WTC11 (cell line): ENCODE measurements at regions of chr17 and their contacts with region 1.

Region 1: DNA sequence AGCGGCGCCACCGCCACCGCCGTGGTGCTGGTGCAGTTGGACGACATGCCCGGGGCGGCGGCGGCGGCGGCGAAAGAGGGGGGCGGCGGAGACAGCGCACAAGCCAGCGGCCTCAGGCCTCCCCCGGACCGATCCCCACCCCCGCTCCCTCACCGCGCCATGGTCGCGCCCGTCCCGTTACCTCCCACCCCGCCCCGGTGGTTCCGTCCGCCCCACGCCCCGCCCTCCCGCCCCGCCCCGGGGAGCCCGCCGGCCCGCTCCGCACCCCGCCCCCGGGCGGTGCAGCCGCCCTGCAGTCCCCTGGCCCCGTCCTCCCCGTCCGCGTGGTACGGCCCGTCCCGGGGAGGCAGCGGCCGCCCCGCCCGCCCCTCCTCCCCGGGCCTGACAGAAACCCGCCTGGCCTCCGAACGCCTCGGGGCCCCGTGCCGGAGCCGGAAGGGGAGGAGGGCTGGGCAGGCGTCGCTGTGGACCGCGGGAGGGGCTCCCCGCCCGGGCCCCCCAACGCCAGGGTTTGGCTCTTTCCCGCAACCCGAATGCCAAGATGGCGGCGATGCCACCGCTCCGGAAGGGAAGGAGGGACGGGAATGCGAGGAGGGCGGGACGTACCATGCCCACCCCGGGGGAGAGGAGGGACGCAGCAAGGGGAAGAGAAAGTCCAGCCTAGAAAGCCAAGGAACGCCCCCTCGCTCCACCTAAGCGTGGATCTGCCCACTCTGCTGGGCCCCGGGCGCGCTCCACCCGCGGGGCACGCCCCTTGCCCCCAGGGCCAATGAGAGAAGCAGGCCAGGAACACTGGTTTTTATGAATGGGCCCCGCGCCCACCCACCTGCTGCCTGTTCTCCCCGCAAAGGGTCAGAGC is at the start of gene PIP4K2B:
- DNase-seq: peak; percentile 97
- ATAC-seq: peak; percentile 94
- H3K4me3 Mint-ChIP-seq: peak within 1 kb of the TSS; percentile 98
- H3K27ac Mint-ChIP-seq: peak within 1 kb of the TSS; percentile 97
- H3K4me1 Mint-ChIP-seq: peaks cover 21% of the 10 kb centered on the region
- H3K27me3 Mint-ChIP-seq: no peaks in the 10 kb centered on the region
- CTCF ChIP-seq: no peak
- total RNA-seq, gene PIP4K2B: 54.0 to 61.9 TPM (median 57.3 TPM) in 3 replicates

Region 2: DNA sequence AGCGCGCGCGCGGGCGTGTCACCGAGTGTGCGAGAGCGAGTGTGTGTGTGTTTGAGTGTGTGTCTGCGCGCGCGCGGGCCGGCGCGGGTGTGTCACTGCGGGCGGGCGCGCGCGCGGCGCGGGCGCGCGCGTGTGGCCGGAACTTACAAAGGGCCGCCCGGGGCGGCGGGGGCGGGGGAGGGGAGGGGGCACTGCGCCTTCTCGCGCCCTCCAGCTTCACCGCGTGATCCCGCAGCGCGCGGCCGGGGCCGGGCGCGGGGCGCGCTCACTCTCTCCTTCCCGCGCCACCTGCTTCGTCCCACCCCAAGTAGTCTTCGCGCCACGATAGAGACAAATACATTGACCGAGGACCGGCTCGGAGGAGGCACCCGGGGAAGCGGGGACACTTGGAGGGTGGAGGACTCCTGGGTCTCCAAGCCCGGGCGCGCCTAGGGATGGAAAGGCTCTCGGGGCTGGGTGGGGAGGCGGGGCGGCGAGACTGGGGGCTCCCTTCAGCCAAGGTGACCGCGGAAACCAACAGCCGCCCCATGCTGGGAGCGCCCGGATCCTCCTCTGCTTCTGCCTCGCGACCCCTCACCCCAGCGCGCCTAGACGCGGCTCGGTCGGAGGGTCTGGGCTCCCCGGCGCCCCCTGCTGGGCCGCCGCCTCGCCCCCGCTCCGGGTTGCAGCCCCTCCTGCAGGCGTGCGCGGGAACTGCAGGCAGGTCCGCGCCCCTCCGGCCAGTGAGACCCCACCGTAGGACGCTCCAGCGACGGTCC is 193.5 kb before region 1 on chr17 and contains the start of gene SRCIN1:
- CTCF ChIA-PET with region 1: no interaction called
- POLR2A ChIA-PET with region 1: no interaction called
- DNase-seq: peak; percentile 74
- ATAC-seq: peak; percentile 5
- H3K4me3 Mint-ChIP-seq: peak within 1 kb of the TSS; percentile 71
- H3K27ac Mint-ChIP-seq: no peak within 1 kb of the TSS
- H3K4me1 Mint-ChIP-seq: peaks cover 72% of the 10 kb centered on the region
- H3K27me3 Mint-ChIP-seq: peaks cover 44% of the 10 kb centered on the region
- CTCF ChIP-seq: peak; percentile 99
- total RNA-seq, gene SRCIN1: 10.7 to 17.3 TPM (median 11.1 TPM) in 3 replicates

Region 3: GRCh38 chr17:38702166-38702899 is 97.3 kb before region 1 on chr17:
- CTCF ChIA-PET with region 1: no interaction called
- POLR2A ChIA-PET with region 1: no interaction called
- DNase-seq: peak; percentile 81
- ATAC-seq: peak; percentile 31
- H3K4me3 Mint-ChIP-seq: peak overlapping the region; percentile 88
- H3K27ac Mint-ChIP-seq: no peak overlapping the region
- H3K4me1 Mint-ChIP-seq: peaks cover 48% of the 10 kb centered on the region
- H3K27me3 Mint-ChIP-seq: peaks cover 91% of the 10 kb centered on the region
- CTCF ChIP-seq: no peak

Region 4: DNA sequence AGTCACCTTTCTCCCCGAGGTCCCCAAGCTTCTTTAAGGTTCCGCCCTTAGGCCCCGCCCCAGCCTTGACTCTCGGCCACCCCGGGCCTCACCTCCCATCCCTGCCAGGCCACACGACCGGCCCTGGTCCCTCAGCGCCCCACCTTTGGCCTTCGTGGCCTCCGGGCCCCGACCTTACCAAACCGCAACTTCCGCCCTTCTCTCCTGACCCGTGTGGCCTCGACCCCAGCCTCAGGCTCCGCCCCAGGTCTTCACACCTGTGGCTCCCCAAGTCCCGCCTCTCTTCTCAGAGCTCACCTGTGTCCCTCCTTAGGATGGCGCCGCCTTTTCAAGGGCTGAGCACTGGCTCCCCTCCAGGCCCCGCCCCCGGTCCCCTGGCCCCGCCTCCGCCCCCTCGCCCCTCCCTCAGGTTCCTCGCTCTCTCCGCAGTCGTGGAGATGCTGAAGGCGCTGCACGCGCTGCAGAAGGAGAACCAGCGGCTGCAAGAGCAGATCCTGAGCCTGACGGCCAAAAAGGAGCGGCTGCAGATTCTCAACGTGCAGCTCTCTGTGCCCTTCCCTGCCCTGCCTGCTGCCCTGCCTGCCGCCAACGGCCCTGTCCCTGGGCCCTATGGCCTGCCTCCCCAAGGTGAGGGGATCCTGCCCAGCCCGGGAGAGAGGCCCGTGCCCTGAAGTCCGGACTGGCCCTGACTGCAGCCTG is 79.5 kb before region 1 on chr17:
- CTCF ChIA-PET with region 1: no interaction called
- POLR2A ChIA-PET with region 1: no interaction called
- DNase-seq: peak; percentile 85
- ATAC-seq: peak; percentile 69
- H3K4me3 Mint-ChIP-seq: peak overlapping the region; percentile 54
- H3K27ac Mint-ChIP-seq: no peak overlapping the region
- H3K4me1 Mint-ChIP-seq: peaks cover 39% of the 10 kb centered on the region
- H3K27me3 Mint-ChIP-seq: peaks cover 12% of the 10 kb centered on the region
- CTCF ChIP-seq: no peak

Region 5: DNA sequence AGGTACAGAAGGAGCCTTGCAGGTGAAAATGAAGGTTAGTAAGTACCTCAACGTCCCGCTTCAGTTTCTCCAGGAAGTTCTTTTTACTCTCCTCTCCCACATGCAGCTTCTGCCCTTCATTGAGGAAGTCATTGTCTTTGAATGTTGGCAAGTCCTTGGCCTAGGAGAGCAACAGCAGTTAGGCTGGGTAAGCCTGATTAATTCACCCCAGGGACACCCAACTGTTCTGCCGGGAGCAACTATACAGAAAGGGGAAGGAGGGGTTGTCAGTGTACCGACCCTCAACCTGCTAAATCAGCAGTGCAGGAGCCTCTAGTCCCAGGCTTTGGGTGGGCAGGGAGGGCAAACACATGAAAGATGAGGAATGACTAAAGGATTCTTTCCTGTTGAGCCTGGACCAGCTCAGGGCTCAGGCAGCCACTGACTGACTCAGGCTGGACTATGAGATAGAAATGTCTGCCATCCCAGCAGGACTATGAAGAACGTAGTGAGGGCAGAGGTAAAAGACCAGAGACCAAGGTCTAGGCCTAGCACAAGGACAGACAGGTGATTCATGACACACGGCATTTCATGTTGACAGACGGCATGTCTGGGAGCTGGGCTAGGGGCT is 21.9 kb before region 1 on chr17:
- CTCF ChIA-PET with region 1: no interaction called
- POLR2A ChIA-PET with region 1: no interaction called
- DNase-seq: no peak
- ATAC-seq: no peak
- H3K4me3 Mint-ChIP-seq: no peak overlapping the region
- H3K27ac Mint-ChIP-seq: no peak overlapping the region
- H3K4me1 Mint-ChIP-seq: no peaks in the 10 kb centered on the region
- H3K27me3 Mint-ChIP-seq: no peaks in the 10 kb centered on the region
- CTCF ChIP-seq: no peak

Region 6: GRCh38 chr17:39199820-39200069 is 400.1 kb after region 1 on chr17:
- CTCF ChIA-PET with region 1: no interaction called
- POLR2A ChIA-PET with region 1: interaction called, 16 read pairs
- DNase-seq: peak; percentile 83
- ATAC-seq: peak; percentile 25
- H3K4me3 Mint-ChIP-seq: peak overlapping the region; percentile 98
- H3K27ac Mint-ChIP-seq: peak overlapping the region; percentile 100
- H3K4me1 Mint-ChIP-seq: peaks cover 48% of the 10 kb centered on the region
- H3K27me3 Mint-ChIP-seq: no peaks in the 10 kb centered on the region; the same call in 1 of the 2 replicates
- CTCF ChIP-seq: no peak